ENCODE measurements at regions of chr7 and their contacts with region 1.

Region 1: GRCh38 chr7:95545078-95545498 is 51.2 kb downstream of the PDK4 start:
- DNase-seq: peak; percentile 83
- H3K4me3 ChIP-seq: peak overlapping the region; percentile 12 to 42 (median 30)
- H3K27ac ChIP-seq: peak overlapping the region; percentile 89 to 95 (median 94)
- H3K4me1 ChIP-seq: peaks cover 0 to 58% (median 49%) of the 10 kb centered on the region in 4 donors
- H3K27me3 ChIP-seq: no peaks in the 10 kb centered on the region
- CTCF ChIP-seq: peak in 3 of 4 experiments; percentile 67 to 78 (median 77)
- EP300 ChIP-seq: no peak
- POLR2A ChIP-seq: no peak

Region 2: GRCh38 chr7:95582578-95583293 is 37.6 kb after region 1 on chr7:
- intact Hi-C with region 1: loop called (anchors 2 kb)
- DNase-seq: peak; percentile 74
- H3K4me3 ChIP-seq: no peak overlapping the region
- H3K27ac ChIP-seq: peak overlapping the region; percentile 9 to 93 (median 48)
- H3K4me1 ChIP-seq: peaks cover 0 to 28% (median 19%) of the 10 kb centered on the region in 4 donors
- H3K27me3 ChIP-seq: no peaks in the 10 kb centered on the region
- CTCF ChIP-seq: no peak
- EP300 ChIP-seq: no peak
- POLR2A ChIP-seq: no peak

Region 3: DNA sequence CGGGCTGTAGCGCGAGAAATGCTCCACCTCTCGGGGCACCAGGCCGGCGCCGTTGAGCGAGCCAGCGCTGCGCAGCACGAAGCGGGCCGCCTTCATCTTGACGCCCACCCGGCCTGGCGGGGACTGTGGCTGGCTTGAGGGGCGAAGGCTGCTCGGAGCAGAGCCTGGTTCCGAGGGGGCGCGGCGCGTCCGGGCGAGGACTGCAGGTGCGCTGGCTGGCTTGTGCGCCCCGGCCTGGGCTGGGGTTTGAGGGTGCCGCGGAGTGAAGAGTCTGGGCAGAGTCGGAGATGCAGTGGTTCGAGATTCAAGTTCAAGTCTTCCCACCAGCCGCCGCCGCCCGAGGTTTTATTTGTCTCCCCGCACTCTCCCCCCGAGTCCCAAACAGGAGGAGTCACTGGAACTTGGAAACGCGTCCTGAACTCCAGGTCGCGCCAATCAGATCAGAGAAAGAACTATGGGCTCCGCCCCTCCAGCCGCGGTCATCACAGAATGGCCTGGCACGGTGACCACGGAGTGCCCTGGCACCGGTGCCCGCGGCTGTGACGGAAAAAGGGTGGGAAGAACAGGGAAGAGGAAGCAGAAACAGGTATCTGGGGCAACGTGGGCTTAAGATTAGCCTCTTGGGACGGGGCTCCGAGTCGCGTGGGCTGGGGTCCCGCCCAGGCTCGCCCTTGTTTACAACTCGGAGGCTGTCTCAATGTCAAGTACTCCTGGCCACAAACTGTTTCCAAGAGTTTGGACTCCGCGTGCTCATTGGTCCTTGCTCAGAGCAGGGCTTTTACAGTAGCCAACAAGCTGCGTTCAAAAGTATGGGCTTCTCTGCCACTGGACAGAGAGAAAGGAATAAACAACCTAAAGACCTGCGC is 51.3 kb after region 1 on chr7 and contains the start of gene PDK4:
- intact Hi-C with region 1: loop called (anchors 1 kb)
- DNase-seq: peak; percentile 99
- H3K4me3 ChIP-seq: peak within 1 kb of the TSS; percentile 70 to 93 (median 83)
- H3K27ac ChIP-seq: peak within 1 kb of the TSS; percentile 92 to 99 (median 95)
- H3K4me1 ChIP-seq: peaks cover 0 to 39% (median 34%) of the 10 kb centered on the region in 4 donors
- H3K27me3 ChIP-seq: no peaks in the 10 kb centered on the region
- CTCF ChIP-seq: no peak
- EP300 ChIP-seq: peak; percentile 63 to 90 (median 78)
- POLR2A ChIP-seq: peak; percentile 79 to 84
- total RNA-seq, gene PDK4: 254 to 1,066 (median 595) TPM

Region 4: DNA sequence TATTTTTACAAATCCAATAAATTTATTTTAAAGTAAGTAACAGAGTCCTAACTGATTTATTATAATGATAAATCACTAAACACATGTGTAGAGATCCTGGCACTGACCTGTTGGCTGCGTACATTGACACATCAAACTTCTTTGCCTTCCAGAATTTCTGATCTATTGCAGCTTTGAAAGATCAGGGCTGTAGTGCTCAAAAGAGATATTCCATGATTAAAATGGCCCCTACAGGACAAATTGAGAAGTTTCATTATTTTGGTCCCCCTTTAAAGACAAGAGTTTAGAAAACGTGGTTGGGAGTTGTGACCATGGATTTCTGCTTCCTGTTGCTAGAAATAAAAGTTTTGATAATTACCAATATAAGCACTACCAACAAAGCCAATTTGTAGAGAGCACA is 138.9 kb after region 1 on chr7:
- intact Hi-C with region 1: loop called (anchors 2 kb)
- DNase-seq: no peak
- H3K4me3 ChIP-seq: no peak overlapping the region
- H3K27ac ChIP-seq: peak overlapping the region in 3 of 4 donors; percentile 7 to 42 (median 12)
- H3K4me1 ChIP-seq: peaks cover 0 to 15% (median 4%) of the 10 kb centered on the region in 4 donors
- H3K27me3 ChIP-seq: no peaks in the 10 kb centered on the region
- CTCF ChIP-seq: peak in 3 of 4 experiments; percentile 60 to 78 (median 68)
- EP300 ChIP-seq: no peak
- POLR2A ChIP-seq: no peak

Region 5: GRCh38 chr7:95772298-95772770 is 227.2 kb after region 1 on chr7 and contains the start of gene DYNC1I1:
- intact Hi-C with region 1: loop called (anchors 10 kb)
- DNase-seq: peak; percentile 88
- H3K4me3 ChIP-seq: peak within 1 kb of the TSS; percentile 71 to 92 (median 88)
- H3K27ac ChIP-seq: peak within 1 kb of the TSS; percentile 60 to 90 (median 88)
- H3K4me1 ChIP-seq: peaks cover 0 to 51% (median 28%) of the 10 kb centered on the region in 4 donors
- H3K27me3 ChIP-seq: no peaks in the 10 kb centered on the region
- CTCF ChIP-seq: no peak
- EP300 ChIP-seq: no peak
- POLR2A ChIP-seq: no peak
- total RNA-seq, gene DYNC1I1: 37.8 to 65.2 (median 56.6) TPM